Cardiac septum (tissue), 1 donor: ENCODE measurements at regions of chr6 and their contacts with region 1.

Region 1: DNA sequence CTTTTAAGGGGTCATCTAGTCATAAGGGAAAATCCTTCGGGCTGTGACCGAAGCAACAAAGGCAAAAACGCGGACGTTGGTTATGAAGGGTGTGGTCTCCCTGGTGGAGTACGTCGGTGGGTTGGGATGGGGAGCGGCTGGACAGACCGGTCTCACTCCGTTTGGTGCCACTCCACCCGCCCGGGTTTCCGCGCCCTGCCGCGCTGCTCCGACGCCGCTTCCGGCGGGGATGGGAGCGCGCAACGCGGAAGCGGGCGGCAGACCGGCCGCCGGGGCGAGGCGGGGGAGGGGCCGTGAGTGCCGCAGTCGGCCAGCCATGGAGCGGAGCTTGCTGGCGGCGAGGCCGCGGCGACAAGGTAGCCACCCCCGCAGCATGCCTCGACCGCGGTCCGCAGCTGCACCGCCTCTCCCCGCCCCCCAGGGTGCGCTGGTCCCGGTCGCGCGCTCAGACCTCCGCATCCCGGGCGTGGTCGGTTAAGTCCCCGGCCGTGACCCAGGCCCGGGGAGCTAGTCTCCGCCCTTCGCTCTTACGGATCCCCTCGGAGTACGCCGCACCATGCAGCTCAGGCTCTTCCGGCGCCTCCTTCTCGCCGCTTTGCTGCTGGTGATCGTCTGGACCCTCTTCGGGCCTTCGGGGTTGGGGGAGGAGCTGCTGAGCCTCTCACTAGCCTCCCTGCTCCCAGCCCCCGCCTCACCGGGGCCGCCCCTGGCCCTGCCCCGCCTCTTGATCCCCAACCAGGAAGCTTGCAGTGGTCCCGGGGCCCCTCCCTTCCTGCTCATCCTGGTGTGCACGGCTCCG is at the start of gene B3GALT4:
- DNase-seq: peak; percentile 90
- total RNA-seq, gene B3GALT4: 9.3 TPM

Region 2: GRCh38 chr6:33299237-33299944 is 22.3 kb after region 1 on chr6:
- intact Hi-C with region 1: loop called (anchors 1 kb)
- DNase-seq: peak; percentile 96

Region 3: DNA sequence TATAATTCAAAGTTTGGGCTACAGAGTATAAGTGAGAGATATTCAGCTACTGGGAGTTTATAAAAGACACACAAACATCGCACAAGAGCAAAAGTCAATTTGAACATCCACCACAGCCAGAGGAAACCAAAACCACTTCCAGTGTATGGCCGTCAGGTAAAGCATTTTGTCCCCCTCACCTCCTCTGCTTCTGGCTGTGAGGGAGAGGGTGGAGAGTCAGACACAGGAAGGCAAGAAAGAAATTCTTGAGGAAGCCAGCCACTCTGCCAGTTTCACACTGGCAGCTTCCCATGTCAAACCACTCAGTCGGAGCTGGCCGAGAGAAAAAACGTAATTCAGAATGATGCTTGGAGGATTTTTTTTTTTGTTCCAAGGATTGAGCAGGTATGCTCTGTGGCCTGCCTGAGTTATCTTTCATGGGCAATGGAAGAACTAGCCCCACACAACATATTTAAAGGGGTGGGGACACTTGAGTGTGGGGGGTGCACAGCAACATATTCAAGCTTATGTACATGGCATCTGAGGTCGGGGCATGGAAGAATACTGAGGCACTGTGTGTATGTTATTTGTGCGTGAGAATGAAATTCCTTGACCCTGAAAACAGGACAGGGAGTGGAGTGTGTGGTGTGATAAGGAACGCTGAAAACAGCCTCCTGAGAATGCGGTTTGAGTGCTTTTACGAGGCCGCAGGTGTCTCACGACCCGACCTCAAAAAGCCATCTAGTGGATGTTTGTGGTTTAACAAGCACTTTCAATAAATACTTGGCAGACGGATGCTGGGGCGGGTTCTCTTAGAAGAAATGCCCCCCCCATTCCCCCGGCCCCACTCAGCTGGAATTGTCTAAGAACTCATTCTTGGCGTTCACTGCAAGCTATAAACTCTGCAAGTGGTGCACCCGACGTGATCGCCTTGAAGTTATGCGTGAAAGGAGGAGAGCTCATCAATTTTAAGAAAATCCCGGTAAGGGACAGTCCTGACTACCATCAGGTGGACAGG is 67.9 kb after region 1 on chr6:
- intact Hi-C with region 1: loop called (anchors 2 kb)
- DNase-seq: no peak

Region 4: DNA sequence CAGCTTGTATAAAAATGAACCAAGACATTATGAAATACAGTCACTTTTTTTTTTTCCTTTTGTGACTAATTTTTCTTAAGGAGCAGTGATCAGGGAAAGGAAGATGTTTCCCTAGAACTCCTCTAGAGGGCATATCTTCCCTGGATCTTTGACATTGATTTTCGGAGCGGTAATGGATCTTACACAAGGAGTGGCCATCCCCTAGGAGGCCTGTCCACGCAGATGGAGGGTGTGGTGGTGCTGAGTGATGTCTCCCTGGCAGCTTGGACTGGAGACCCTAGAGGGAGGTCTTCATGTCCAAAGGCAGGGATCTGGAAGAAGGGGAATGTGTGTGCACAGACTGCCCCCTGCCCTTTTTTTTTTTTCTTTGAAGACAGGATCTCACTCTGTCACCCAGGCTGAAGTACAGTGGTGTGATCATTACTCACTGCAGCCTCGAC is 107.5 kb after region 1 on chr6:
- intact Hi-C with region 1: no loop called
- DNase-seq: no peak